MCF 10A (cell line): ENCODE measurements at regions of chr14 and their contacts with region 1.

Region 1: GRCh38 chr14:36604757-36605505 is 22.5 kb upstream of the NKX2-8 start:
- DNase-seq: peak; percentile 90
- H3K4me3 Mint-ChIP-seq: no peak overlapping the region
- H3K27ac Mint-ChIP-seq: no peak overlapping the region
- H3K4me1 Mint-ChIP-seq: peaks cover 12% of the 10 kb centered on the region
- H3K27me3 Mint-ChIP-seq: no peaks in the 10 kb centered on the region
- CTCF ChIP-seq: peak; percentile 63

Region 2: DNA sequence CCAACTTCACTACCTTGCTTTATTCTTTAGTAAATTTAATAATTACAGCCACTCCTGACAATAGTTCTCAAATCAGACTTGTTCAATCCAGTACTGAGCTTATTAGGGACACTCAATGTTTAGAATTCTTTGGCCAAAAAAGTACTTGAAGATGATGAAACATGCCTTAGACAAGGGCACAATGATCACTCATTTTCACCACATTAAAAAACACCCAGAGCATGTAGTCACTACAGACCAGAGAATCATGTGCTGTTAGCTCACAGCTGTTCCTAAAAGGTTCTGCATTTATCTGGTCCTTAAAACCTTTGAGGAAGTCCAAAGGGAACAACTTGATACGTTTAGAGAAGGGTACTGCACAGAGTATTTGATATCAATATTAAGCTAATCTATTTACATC is 972.3 kb before region 1 on chr14:
- CTCF ChIA-PET with region 1: no interaction called
- POLR2A ChIA-PET with region 1: no interaction called
- intact Hi-C with region 1: no loop called
- DNase-seq: no peak
- H3K4me3 Mint-ChIP-seq: no peak overlapping the region
- H3K27ac Mint-ChIP-seq: no peak overlapping the region
- H3K4me1 Mint-ChIP-seq: peaks cover 4% of the 10 kb centered on the region
- H3K27me3 Mint-ChIP-seq: no peaks in the 10 kb centered on the region
- CTCF ChIP-seq: no peak

Region 3: DNA sequence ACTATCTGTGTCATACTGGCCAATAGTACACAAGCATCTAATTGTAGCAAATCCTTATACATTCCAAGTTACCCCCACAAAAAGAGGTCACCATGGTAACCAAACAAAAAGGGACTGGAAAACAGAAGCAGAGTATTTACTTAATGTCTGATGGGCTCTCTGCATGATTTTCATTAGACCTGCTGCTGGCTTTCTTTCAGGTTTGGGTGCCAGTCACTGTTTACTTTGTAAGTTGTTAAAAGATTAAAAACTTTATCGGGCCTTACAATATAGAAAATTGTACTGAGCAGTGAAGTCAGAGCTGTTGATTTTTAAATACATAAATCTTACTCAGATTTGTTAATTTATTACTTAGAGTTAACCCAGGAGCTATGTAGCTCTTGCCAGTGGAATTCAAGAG is 654.9 kb before region 1 on chr14:
- CTCF ChIA-PET with region 1: no interaction called
- POLR2A ChIA-PET with region 1: no interaction called
- intact Hi-C with region 1: loop called (anchors 10 kb)
- DNase-seq: no peak
- H3K4me3 Mint-ChIP-seq: no peak overlapping the region
- H3K27ac Mint-ChIP-seq: no peak overlapping the region
- H3K4me1 Mint-ChIP-seq: no peaks in the 10 kb centered on the region
- H3K27me3 Mint-ChIP-seq: no peaks in the 10 kb centered on the region
- CTCF ChIP-seq: no peak

Region 4: DNA sequence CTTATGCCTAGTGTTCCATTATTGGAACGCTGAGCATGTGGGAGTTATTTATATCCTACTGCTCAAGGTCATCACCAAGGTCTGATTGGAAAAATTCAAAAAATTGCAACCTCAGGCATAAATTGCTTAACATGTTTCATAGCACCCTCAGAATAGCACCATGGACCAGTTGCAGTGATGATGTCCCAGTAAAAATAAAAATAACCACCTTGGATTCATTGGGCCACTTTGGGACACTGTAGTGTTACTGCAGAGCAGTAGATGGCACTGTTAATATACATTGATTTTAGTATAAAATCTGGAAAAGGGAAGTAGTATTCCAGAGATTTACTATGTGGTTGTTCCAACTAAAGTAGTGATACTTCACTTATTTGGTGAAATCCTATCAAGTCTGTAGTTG is 397.4 kb before region 1 on chr14:
- CTCF ChIA-PET with region 1: interaction called, 4 read pairs
- POLR2A ChIA-PET with region 1: no interaction called
- intact Hi-C with region 1: loop called (anchors 10 kb)
- DNase-seq: peak; percentile 22
- H3K4me3 Mint-ChIP-seq: no peak overlapping the region
- H3K27ac Mint-ChIP-seq: no peak overlapping the region
- H3K4me1 Mint-ChIP-seq: no peaks in the 10 kb centered on the region
- H3K27me3 Mint-ChIP-seq: no peaks in the 10 kb centered on the region
- CTCF ChIP-seq: peak; percentile 48

Region 5: DNA sequence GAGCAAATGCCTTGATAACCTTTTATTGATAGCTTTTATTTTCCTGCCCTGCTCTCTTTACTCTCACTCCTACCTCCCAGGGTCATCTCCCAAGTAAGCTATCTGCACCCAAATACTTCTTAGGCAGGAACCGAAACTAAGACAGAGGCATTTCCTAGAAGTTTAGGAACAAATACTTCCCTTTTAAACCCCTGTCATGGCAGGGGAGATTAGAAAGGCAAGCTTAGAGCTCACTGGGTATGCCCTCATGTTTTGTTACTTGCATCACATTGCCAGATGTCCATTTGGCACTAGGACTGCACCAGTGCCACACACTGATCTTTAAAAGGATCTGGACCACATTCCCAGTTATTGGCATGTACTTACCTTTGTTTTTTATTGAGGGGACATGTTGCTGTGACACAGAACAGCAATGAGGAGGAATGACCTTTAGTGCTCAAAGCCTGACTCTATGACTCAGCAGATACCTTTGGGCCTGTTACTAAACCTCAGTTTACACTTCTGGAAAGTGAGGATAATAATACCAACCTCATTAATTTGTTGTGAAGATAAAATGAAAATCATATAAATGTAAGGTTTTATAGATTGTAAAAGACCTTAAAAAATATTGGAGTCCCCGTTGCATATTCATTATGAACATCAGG is 243.6 kb before region 1 on chr14:
- CTCF ChIA-PET with region 1: no interaction called
- POLR2A ChIA-PET with region 1: no interaction called
- intact Hi-C with region 1: no loop called
- DNase-seq: no peak
- H3K4me3 Mint-ChIP-seq: no peak overlapping the region
- H3K27ac Mint-ChIP-seq: no peak overlapping the region
- H3K4me1 Mint-ChIP-seq: no peaks in the 10 kb centered on the region
- H3K27me3 Mint-ChIP-seq: no peaks in the 10 kb centered on the region
- CTCF ChIP-seq: no peak

Region 6: DNA sequence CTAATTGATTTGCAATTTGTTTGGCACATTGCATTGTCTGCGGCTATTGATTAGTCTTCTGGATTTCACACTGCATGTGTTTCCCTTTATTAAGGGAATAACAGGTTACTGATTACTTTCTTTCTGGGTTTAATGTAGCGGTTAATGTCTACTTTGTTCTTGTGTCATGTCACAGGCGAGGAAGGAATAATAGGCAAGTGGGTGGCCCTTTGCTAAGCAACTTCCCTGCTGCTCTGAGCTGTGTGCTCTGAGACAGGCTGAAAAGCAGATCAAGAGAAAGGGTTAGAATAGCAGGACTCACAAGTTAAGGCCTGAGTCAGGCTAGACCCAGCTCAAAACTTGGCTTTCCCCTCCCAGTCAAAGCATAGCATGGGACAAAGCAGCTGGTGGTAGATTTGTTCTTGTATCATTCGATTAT is 162.1 kb before region 1 on chr14:
- CTCF ChIA-PET with region 1: no interaction called
- POLR2A ChIA-PET with region 1: no interaction called
- intact Hi-C with region 1: no loop called
- DNase-seq: no peak
- H3K4me3 Mint-ChIP-seq: no peak overlapping the region
- H3K27ac Mint-ChIP-seq: no peak overlapping the region
- H3K4me1 Mint-ChIP-seq: no peaks in the 10 kb centered on the region
- H3K27me3 Mint-ChIP-seq: no peaks in the 10 kb centered on the region
- CTCF ChIP-seq: no peak

Region 7: GRCh38 chr14:36580856-36581831 is 23.8 kb before region 1 on chr14:
- CTCF ChIA-PET with region 1: interaction called, 11 read pairs
- POLR2A ChIA-PET with region 1: interaction called, 3 read pairs
- intact Hi-C with region 1: no loop called
- DNase-seq: peak; percentile 65
- H3K4me3 Mint-ChIP-seq: peak overlapping the region; percentile 75
- H3K27ac Mint-ChIP-seq: no peak overlapping the region
- H3K4me1 Mint-ChIP-seq: no peaks in the 10 kb centered on the region
- H3K27me3 Mint-ChIP-seq: no peaks in the 10 kb centered on the region
- CTCF ChIP-seq: no peak

Region 8: DNA sequence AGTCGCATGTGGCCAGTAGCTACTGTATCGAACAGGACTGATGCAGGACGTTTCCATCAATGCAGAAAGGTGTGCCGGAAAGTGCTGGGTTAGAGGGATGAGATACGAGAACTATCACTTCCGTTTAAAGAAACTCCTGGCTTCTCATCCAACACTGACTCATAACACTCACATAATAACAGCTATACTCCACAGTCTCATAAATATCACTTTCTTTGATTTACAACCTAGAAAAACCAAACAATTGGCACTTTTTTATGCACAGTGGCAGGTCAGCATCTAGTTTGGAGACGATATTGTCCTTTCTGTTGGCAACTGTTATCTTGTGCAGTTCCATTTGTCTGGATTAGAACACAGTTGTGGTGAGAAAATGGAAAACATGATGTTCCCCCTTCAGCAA is 524.1 kb after region 1 on chr14:
- CTCF ChIA-PET with region 1: no interaction called
- POLR2A ChIA-PET with region 1: no interaction called
- intact Hi-C with region 1: no loop called
- DNase-seq: no peak
- H3K4me3 Mint-ChIP-seq: no peak overlapping the region
- H3K27ac Mint-ChIP-seq: no peak overlapping the region
- H3K4me1 Mint-ChIP-seq: no peaks in the 10 kb centered on the region
- H3K27me3 Mint-ChIP-seq: no peaks in the 10 kb centered on the region
- CTCF ChIP-seq: no peak

Region 9: DNA sequence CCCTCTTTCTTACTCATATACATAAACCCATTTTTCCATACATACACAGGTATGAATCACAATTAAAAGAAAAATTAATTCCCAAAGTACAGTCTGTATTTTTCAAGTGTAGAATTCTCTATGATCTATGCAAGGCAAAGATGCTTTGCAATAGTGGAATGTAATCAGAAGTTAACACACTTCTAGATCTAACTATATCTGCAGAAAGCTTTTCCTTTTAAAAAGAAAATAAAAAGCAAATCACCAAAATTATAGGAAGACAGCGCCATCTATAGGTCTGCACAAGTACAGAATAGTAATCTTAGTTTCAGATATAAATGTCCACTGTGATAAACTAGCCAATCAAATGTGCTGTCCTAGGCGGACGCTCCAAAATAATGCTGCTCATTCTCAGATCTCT is 545.5 kb after region 1 on chr14:
- CTCF ChIA-PET with region 1: interaction called, 15 read pairs
- POLR2A ChIA-PET with region 1: no interaction called
- intact Hi-C with region 1: no loop called
- DNase-seq: peak; percentile 63
- H3K4me3 Mint-ChIP-seq: no peak overlapping the region
- H3K27ac Mint-ChIP-seq: peak overlapping the region; percentile 16
- H3K4me1 Mint-ChIP-seq: peaks cover 14% of the 10 kb centered on the region
- H3K27me3 Mint-ChIP-seq: no peaks in the 10 kb centered on the region
- CTCF ChIP-seq: peak; percentile 54